ENCODE measurements at regions of chr6 and their contacts with region 1.

Region 1: GRCh38 chr6:118283766-118284165 is 264.3 kb upstream of the PLN start:
- DNase-seq: peak; percentile 70
- H3K4me3 Mint-ChIP-seq: no peak overlapping the region
- H3K27ac Mint-ChIP-seq: no peak overlapping the region
- H3K4me1 Mint-ChIP-seq: peaks cover 3% of the 10 kb centered on the region
- H3K27me3 Mint-ChIP-seq: peaks cover 11% of the 10 kb centered on the region
- CTCF ChIP-seq: peak; percentile 75

Region 2: GRCh38 chr6:117840541-117840983 is 443.2 kb before region 1 on chr6:
- CTCF ChIA-PET with region 1: interaction called, 5 read pairs
- POLR2A ChIA-PET with region 1: no interaction called
- intact Hi-C with region 1: loop called (anchors 5 kb)
- DNase-seq: peak; percentile 82
- H3K4me3 Mint-ChIP-seq: no peak overlapping the region
- H3K27ac Mint-ChIP-seq: no peak overlapping the region
- H3K4me1 Mint-ChIP-seq: no peaks in the 10 kb centered on the region
- H3K27me3 Mint-ChIP-seq: peaks cover 73% of the 10 kb centered on the region
- CTCF ChIP-seq: peak; percentile 37

Region 3: DNA sequence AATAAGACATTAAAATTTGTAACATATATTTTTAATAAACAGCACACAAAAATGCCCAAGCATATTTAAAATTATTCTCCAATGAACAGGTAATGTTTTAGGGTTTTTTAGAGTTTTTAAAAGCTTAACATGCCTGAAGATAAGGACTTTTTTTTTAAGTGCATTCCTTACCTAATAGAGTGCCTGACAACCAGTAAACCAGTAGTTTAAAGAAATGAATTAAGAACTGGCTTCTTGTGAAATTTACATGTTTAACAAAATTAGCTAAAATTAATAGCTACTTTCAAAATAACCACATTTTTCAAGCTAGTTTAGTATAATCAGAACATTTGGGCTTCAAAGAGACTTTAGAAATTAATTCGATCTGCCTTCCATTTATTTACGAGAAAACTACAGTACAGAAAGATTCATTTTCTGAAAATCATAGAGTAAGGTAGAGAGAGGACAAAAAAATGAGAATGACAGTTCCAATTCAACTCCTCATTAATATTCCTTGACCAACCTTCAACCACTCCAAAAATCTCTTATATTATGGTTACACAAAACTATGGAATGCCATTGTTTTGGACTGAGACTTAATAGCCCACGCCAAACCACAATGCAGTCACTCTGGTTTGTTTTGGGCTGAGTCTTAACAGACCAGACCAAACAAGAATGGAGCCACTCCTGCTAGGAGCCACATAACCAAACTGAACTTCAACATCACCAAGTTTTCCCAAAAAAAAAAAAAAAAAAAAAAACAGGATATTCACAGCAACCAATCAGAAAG is 258.6 kb after region 1 on chr6:
- CTCF ChIA-PET with region 1: interaction called, 10 read pairs
- POLR2A ChIA-PET with region 1: no interaction called
- intact Hi-C with region 1: no loop called
- DNase-seq: no peak
- H3K4me3 Mint-ChIP-seq: no peak overlapping the region
- H3K27ac Mint-ChIP-seq: no peak overlapping the region
- H3K4me1 Mint-ChIP-seq: no peaks in the 10 kb centered on the region
- H3K27me3 Mint-ChIP-seq: no peaks in the 10 kb centered on the region
- CTCF ChIP-seq: no peak

Region 4: DNA sequence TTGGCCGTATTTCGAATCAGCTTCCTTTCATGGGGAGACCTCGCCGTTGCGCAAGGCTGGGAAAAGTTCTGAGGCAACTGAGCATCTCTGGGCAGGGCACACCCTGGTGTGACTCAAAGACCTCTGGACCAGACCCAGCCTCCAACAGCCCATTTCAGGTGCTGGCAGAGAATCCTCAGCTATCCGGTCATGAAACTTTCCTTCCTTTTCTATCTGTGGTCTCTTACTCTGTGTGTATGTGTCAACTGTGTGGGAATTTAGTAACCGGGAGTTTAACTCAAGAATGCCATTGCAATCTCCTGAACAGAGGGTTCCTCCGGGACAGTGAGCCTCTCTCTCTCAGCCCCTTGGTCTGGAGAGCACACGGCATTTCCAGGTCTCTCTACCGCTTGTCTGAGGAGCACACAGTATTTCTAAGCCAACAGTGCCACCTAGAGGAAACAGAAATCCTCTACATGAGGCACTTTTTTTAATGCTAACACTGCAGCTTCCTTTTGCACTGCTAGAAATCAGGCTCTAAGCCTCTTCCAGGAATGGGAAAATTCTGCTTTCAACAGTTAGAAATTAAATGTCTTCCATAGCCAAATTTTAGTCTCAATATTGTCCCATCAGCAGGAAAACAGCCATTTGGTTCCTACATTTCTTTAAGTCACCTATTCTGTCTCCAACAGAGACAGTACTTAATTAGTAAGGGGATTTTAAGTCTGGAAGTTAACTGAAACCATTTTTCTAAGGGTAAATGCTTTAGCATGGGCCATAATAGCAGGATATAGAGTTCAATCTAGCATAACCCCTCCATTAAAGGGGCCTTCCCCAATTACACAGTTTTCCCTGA is 297.0 kb after region 1 on chr6:
- CTCF ChIA-PET with region 1: interaction called, 16 read pairs
- POLR2A ChIA-PET with region 1: interaction called, 6 read pairs
- intact Hi-C with region 1: loop called (anchors 1 kb)
- DNase-seq: peak; percentile 94
- H3K4me3 Mint-ChIP-seq: peak overlapping the region; percentile 71
- H3K27ac Mint-ChIP-seq: peak overlapping the region; percentile 29
- H3K4me1 Mint-ChIP-seq: peaks cover 16% of the 10 kb centered on the region
- H3K27me3 Mint-ChIP-seq: no peaks in the 10 kb centered on the region
- CTCF ChIP-seq: peak; percentile 68

Region 5: GRCh38 chr6:118776607-118777549 is 493.1 kb after region 1 on chr6:
- CTCF ChIA-PET with region 1: interaction called, 8 read pairs
- POLR2A ChIA-PET with region 1: no interaction called
- intact Hi-C with region 1: loop called (anchors 2 kb)
- DNase-seq: peak; percentile 85
- H3K4me3 Mint-ChIP-seq: peak overlapping the region; percentile 49
- H3K27ac Mint-ChIP-seq: no peak overlapping the region
- H3K4me1 Mint-ChIP-seq: peaks cover 13% of the 10 kb centered on the region
- H3K27me3 Mint-ChIP-seq: no peaks in the 10 kb centered on the region
- CTCF ChIP-seq: peak; percentile 51

Region 6: GRCh38 chr6:118893807-118894424 is 610.1 kb after region 1 on chr6 and contains the start of gene ASF1A:
- CTCF ChIA-PET with region 1: no interaction called
- POLR2A ChIA-PET with region 1: no interaction called
- intact Hi-C with region 1: loop called (anchors 5 kb)
- DNase-seq: peak; percentile 99
- H3K4me3 Mint-ChIP-seq: peak within 1 kb of the TSS; percentile 95
- H3K27ac Mint-ChIP-seq: peak within 1 kb of the TSS; percentile 95
- H3K4me1 Mint-ChIP-seq: peaks cover 21% of the 10 kb centered on the region
- H3K27me3 Mint-ChIP-seq: no peaks in the 10 kb centered on the region
- CTCF ChIP-seq: peak; percentile 52
- total RNA-seq, gene ASF1A: 30.4 and 36.4 TPM in 2 replicates

Region 7: DNA sequence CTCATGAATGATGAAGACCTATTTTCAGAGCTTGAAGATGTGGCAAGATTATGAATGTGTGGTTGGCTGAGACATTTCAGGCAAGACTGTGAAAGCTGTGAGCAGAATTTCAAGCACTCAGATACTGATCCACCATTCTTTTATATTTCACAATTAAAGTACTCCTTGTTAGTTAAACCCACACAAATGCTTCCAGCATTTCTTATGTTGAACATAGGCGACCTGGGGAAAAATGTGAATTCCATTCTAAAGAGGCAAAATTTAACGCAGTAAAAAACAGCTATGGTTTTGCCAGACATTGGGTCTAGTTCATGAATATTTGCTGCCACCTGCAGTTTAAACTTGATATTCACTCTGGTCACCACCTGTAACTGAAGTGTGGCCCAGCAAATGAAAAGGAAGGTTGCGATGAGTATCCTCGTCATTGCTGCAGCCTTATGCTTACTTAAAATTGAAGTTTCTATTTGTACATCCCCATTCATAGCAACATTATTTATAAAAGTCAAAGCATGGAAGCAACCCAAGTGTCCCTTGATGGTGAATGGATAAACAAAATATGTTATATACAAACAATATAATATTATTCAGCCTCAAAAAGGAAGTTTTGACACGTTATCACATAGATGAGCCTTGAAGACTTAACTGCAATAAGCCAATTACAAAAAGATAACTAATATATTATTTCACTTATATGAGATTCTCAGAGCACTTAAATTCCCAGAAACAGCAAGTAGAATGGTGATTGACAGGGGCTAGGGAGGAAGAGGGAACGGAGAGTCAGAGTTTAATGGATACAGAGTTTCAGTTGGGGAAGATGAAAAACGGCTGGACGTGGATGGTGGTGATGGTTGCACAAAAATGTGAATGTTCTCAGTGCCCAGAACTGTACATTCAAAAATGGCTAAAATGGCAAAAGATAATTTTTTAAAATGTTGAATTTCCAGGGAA is 827.1 kb after region 1 on chr6:
- CTCF ChIA-PET with region 1: interaction called, 3 read pairs
- POLR2A ChIA-PET with region 1: no interaction called
- intact Hi-C with region 1: loop called (anchors 2 kb)
- DNase-seq: peak; percentile 68
- H3K4me3 Mint-ChIP-seq: no peak overlapping the region
- H3K27ac Mint-ChIP-seq: no peak overlapping the region
- H3K4me1 Mint-ChIP-seq: no peaks in the 10 kb centered on the region
- H3K27me3 Mint-ChIP-seq: no peaks in the 10 kb centered on the region
- CTCF ChIP-seq: peak; percentile 56

Measured in MCF 10A (cell line).